CD8-positive, alpha-beta memory T cell (primary cell): ENCODE measurements at regions of chr14 and their contacts with region 1.

Region 1: GRCh38 chr14:103333754-103334643 is at the start of gene EIF5:
- DNase-seq: peak; percentile 98 to 99 (median 98)
- H3K4me3 ChIP-seq: peak within 1 kb of the TSS; percentile 83
- H3K4me3 Mint-ChIP-seq: peak within 1 kb of the TSS; percentile 95 to 98 (median 95)
- H3K27ac ChIP-seq: peak within 1 kb of the TSS; percentile 96
- H3K27ac Mint-ChIP-seq: peak within 1 kb of the TSS; percentile 95 to 99 (median 96)
- H3K4me1 ChIP-seq: peaks cover 45% of the 10 kb centered on the region
- H3K4me1 Mint-ChIP-seq: peaks cover 30 to 51% (median 39%) of the 10 kb centered on the region in 3 donors
- H3K27me3 ChIP-seq: no peaks in the 10 kb centered on the region
- H3K27me3 Mint-ChIP-seq: peaks cover 0 to 4% of the 10 kb centered on the region in 2 donors
- total RNA-seq, gene EIF5: 394 to 409 TPM

Region 2: GRCh38 chr14:103315351-103315911 is 18.6 kb before region 1 on chr14:
- CTCF ChIA-PET with region 1: no interaction called
- POLR2A ChIA-PET with region 1: no interaction called
- DNase-seq: no peak
- H3K4me3 ChIP-seq: no peak overlapping the region
- H3K4me3 Mint-ChIP-seq: no peak overlapping the region
- H3K27ac ChIP-seq: peak overlapping the region; percentile 38
- H3K27ac Mint-ChIP-seq: peak overlapping the region in 1 of 8 donors; percentile 57
- H3K4me1 ChIP-seq: no peaks in the 10 kb centered on the region
- H3K4me1 Mint-ChIP-seq: no peaks in the 10 kb centered on the region
- H3K27me3 ChIP-seq: no peaks in the 10 kb centered on the region
- H3K27me3 Mint-ChIP-seq: peaks cover 17 to 43% of the 10 kb centered on the region in 2 donors

Region 3: GRCh38 chr14:103346286-103346685 is 12.3 kb after region 1 on chr14:
- CTCF ChIA-PET with region 1: interaction called, 5 read pairs
- POLR2A ChIA-PET with region 1: interaction called, 21 read pairs
- DNase-seq: no peak
- H3K4me3 ChIP-seq: no peak overlapping the region
- H3K4me3 Mint-ChIP-seq: no peak overlapping the region
- H3K27ac ChIP-seq: no peak overlapping the region
- H3K27ac Mint-ChIP-seq: peak overlapping the region in 1 of 8 donors; percentile 69
- H3K4me1 ChIP-seq: no peaks in the 10 kb centered on the region
- H3K4me1 Mint-ChIP-seq: peaks cover 8 to 18% (median 13%) of the 10 kb centered on the region in 3 donors
- H3K27me3 ChIP-seq: no peaks in the 10 kb centered on the region
- H3K27me3 Mint-ChIP-seq: peaks cover 0 to under 1% of the 10 kb centered on the region in 2 donors

Region 4: DNA sequence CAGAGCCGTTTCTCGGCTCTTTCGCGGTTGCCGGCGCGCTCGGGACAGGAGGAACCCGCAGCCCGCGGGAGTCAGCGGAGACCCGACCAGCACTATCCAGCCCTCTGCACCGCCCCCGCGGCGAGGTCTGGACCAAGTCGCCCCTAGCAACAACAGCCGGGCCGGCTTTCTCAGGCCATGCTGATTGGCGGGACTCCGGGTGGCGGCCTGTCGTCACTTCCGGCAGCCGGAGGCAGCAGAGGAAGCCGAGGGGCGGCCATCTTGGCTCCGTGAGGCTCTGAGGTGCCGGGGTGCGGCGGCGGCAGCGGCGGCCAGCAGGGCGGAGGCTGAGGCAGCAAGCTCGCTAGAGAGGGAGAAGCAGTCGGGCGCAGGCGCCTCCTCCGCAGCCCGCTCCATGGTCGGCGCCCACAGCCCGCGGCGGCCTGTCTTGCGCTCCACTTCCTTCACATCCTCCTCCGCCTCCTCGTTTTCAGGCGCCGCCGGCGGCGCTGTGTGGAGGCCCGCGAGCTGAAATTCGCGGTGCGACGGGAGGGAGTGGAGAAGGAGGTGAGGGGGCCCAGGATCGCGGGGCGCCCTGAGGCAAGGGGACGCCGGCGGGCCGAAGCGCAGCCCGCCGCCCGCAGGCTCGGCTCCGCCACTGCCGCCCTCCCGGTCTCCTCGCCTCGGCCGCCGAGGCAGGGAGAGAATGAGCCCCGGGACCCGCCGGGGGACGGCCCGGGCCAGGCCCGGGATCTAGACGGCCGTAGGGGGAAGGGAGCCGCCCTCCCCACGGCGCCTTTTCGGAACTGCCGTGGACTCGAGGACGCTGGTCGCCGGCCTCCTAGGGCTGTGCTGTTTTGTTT is 51.4 kb after region 1 on chr14 and contains the start of gene MARK3:
- CTCF ChIA-PET with region 1: interaction called, 3 read pairs
- POLR2A ChIA-PET with region 1: interaction called, 25 read pairs
- DNase-seq: peak; percentile 94 to 97 (median 96)
- H3K4me3 ChIP-seq: peak within 1 kb of the TSS; percentile 88
- H3K4me3 Mint-ChIP-seq: peak within 1 kb of the TSS; percentile 95 to 99 (median 98)
- H3K27ac ChIP-seq: peak within 1 kb of the TSS; percentile 87
- H3K27ac Mint-ChIP-seq: peak within 1 kb of the TSS; percentile 93 to 99 (median 96)
- H3K4me1 ChIP-seq: peaks cover 36% of the 10 kb centered on the region
- H3K4me1 Mint-ChIP-seq: peaks cover 30 to 47% (median 40%) of the 10 kb centered on the region in 3 donors
- H3K27me3 ChIP-seq: no peaks in the 10 kb centered on the region
- H3K27me3 Mint-ChIP-seq: peaks cover 1 to 4% of the 10 kb centered on the region in 2 donors
- total RNA-seq, gene MARK3: 91.9 to 92.7 TPM

Region 5: GRCh38 chr14:103418481-103418818 is 84.5 kb after region 1 on chr14:
- CTCF ChIA-PET with region 1: no interaction called
- POLR2A ChIA-PET with region 1: no interaction called
- DNase-seq: no peak
- H3K4me3 ChIP-seq: no peak overlapping the region
- H3K4me3 Mint-ChIP-seq: no peak overlapping the region
- H3K27ac ChIP-seq: peak overlapping the region; percentile 18
- H3K27ac Mint-ChIP-seq: peak overlapping the region in 5 of 8 donors; percentile 4 to 64 (median 38)
- H3K4me1 ChIP-seq: peaks cover 12% of the 10 kb centered on the region
- H3K4me1 Mint-ChIP-seq: peaks cover 40 to 72% (median 68%) of the 10 kb centered on the region in 3 donors
- H3K27me3 ChIP-seq: no peaks in the 10 kb centered on the region
- H3K27me3 Mint-ChIP-seq: no peaks in the 10 kb centered on the region